ENCODE measurements at regions of chr20 and their contacts with region 1.

Region 1: GRCh38 chr20:22974353-22974752 is 60.8 kb upstream of the SSTR4 start:
- DNase-seq: peak; percentile 22
- H3K4me3 ChIP-seq: no peak overlapping the region
- H3K27ac ChIP-seq: no peak overlapping the region
- H3K27me3 ChIP-seq: peaks cover 3% of the 10 kb centered on the region
- CTCF ChIP-seq: peak; percentile 74

Region 2: GRCh38 chr20:22716821-22717351 is 257.5 kb before region 1 on chr20:
- in situ Hi-C with region 1: loop called (anchors 25 kb)
- DNase-seq: no peak
- H3K4me3 ChIP-seq: no peak overlapping the region
- H3K27ac ChIP-seq: peak overlapping the region; percentile 44
- H3K27me3 ChIP-seq: no peaks in the 10 kb centered on the region
- CTCF ChIP-seq: no peak